ENCODE measurements at regions of chr10 and their contacts with region 1.

Region 1: DNA sequence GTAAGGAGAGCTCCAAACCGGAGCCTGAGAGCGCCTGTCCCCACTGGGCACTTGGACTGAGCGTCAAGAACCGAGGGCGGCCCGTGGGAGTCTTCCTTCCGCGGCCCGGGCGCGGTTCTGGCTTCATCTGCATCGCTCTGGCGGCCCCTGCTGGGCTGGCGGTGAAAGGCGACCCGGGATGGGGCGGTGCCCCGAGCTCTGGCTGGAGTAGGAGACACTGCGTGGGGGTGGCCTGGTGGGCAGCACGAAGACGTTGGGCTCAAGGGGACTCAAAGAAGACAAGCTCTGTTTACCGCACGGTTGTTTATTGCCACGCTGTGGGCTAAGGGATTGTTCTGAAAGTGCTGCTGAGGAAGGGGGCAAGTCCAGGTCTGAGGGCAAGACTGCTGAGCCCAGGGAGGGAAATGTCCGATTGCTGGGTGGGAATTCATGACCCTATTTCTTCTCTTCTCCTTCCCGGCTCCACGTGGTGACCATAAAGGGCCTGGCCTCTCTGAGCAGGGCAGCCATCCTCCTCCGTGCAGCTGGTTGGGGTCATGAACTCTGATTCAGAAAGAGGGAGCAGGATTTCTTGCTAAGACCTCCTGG is 29.8 kb downstream of the PLAU start:
- DNase-seq: no peak
- H3K4me3 ChIP-seq: no peak overlapping the region
- H3K27me3 ChIP-seq: no peaks in the 10 kb centered on the region
- CTCF ChIP-seq: peak; percentile 98

Region 2: DNA sequence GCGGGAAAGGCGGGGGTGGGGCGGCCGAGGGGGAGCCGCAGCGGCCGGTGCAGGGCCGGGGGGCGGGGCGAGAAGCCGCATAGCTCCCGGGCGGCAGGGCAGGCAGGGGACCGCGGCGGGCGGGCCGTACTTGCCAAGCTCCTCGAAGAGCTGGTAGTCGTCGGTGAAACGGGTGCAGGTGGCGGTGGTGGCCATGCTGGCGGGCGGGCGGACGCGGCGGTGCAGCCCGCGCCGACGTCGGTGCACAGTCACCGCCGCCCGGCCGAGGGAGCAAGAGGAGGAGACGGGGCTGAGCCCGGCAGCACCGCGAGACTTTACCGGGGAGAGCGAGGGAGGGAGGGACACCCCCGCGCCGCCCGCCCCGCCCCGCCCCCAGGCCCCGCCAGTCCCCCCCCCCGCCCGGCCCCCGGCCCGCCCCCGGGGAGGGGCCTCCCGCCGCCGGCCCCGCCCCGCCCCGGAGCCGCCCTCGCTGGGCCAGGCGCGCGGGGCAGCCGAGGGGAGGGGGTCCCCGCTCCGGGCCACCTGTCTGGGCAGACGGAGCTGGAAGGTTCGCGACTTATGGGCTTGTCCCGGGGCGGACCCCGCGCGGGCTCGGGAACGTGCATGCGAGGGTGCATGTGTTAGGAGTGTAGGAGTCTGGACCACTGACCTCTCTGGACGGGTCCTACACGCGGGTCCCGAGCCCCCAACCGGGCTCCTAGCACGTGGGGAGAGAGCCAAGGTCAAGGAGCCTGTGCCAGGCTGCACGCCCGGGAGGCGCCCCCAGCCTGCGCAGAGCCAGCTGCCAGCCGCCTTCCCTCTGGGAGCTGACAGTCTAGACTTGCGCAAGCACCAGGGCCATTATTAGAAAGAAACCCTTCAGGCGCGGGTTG is 66.2 kb before region 1 on chr10 and contains the start of gene CAMK2G:
- CTCF ChIA-PET with region 1: interaction called, 484 read pairs
- POLR2A ChIA-PET with region 1: no interaction called
- DNase-seq: no peak
- H3K4me3 ChIP-seq: peak within 1 kb of the TSS; percentile 89
- H3K27me3 ChIP-seq: no peaks in the 10 kb centered on the region
- CTCF ChIP-seq: no peak
- polyA plus RNA-seq, gene CAMK2G: 32.5 and 43.8 TPM in 2 replicates

Region 3: GRCh38 chr10:73908853-73909538 is 31.7 kb before region 1 on chr10:
- CTCF ChIA-PET with region 1: interaction called, 13 read pairs
- POLR2A ChIA-PET with region 1: no interaction called
- DNase-seq: peak; percentile 93
- H3K4me3 ChIP-seq: no peak overlapping the region
- H3K27me3 ChIP-seq: no peaks in the 10 kb centered on the region
- CTCF ChIP-seq: no peak

Region 4: GRCh38 chr10:73956476-73957359 is 16.0 kb after region 1 on chr10:
- CTCF ChIA-PET with region 1: interaction called, 32 read pairs
- POLR2A ChIA-PET with region 1: interaction called, 3 read pairs
- DNase-seq: no peak
- H3K4me3 ChIP-seq: no peak overlapping the region
- H3K27me3 ChIP-seq: no peaks in the 10 kb centered on the region
- CTCF ChIP-seq: no peak

Region 5: DNA sequence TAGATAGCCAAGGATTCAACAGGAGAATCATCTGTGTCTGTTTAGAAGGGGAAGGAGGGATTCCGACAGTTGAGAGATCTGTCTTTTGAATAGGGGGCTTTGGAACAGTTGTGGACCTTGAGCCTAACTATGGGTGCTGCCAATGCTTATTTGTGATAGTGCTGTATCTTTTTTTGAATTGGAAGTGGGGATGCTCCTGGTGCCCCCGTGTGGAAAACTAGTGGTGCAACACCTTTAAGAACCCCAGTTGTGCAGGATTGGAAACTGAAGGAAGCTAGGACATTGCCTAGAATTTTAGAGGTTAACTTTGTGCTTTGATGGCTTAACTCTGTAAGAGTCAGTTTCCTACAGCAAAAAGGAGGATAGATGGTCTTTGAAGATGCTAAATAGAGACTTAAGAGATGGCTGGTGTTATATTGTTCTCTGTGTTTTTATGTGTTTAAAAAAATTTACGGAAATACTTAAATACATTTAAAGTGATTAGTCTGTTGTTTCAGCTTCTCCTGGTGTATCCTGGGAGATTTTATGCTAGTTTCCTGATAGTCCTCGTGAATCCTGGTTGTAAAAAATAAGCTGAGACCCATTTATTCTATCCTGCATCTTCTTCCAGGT is 140.6 kb after region 1 on chr10:
- CTCF ChIA-PET with region 1: interaction called, 46 read pairs
- POLR2A ChIA-PET with region 1: no interaction called
- DNase-seq: no peak
- H3K4me3 ChIP-seq: no peak overlapping the region
- H3K27me3 ChIP-seq: no peaks in the 10 kb centered on the region
- CTCF ChIP-seq: peak; percentile 84